HCT116 (cell line): ENCODE measurements at regions of chr4 and their contacts with region 1.

Region 1: GRCh38 chr4:73676861-73677323 is 56.7 kb upstream of the RASSF6 start:
- DNase-seq: no peak
- ATAC-seq: no peak
- H3K4me3 ChIP-seq: no peak overlapping the region
- H3K27ac ChIP-seq: no peak overlapping the region
- H3K4me1 ChIP-seq: peaks cover 0 to 12% of the 10 kb centered on the region in 2 experiments; a peak in 2 of 4 replicates
- H3K27me3 ChIP-seq: no peaks in the 10 kb centered on the region
- CTCF ChIP-seq: no peak
- POLR2A ChIP-seq: no peak
- RAD21 ChIP-seq: no peak

Region 2: GRCh38 chr4:74038161-74039064 is 361.5 kb after region 1 on chr4 and contains the start of gene CXCL3:
- CTCF ChIA-PET with region 1: no interaction called
- POLR2A ChIA-PET with region 1: no interaction called
- RAD21 ChIA-PET with region 1: no interaction called
- intact Hi-C with region 1: loop called (anchors 10 kb)
- DNase-seq: no peak
- ATAC-seq: peak; percentile 91
- H3K4me3 ChIP-seq: peak within 1 kb of the TSS; percentile 73 to 78
- H3K27ac ChIP-seq: peak within 1 kb of the TSS; percentile 44; the same call in 1 of the 2 replicates
- H3K4me1 ChIP-seq: peaks cover 0 to 12% of the 10 kb centered on the region in 2 experiments; a peak in 2 of 4 replicates
- H3K27me3 ChIP-seq: no peaks in the 10 kb centered on the region
- CTCF ChIP-seq: peak in 2 of 3 experiments; percentile 4 to 54; a peak in 2 of 6 replicates
- POLR2A ChIP-seq: no peak
- RAD21 ChIP-seq: no peak
- total RNA-seq, gene CXCL3: 1.9 TPM